ENCODE measurements at regions of chr14 and their contacts with region 1.

Region 1: DNA sequence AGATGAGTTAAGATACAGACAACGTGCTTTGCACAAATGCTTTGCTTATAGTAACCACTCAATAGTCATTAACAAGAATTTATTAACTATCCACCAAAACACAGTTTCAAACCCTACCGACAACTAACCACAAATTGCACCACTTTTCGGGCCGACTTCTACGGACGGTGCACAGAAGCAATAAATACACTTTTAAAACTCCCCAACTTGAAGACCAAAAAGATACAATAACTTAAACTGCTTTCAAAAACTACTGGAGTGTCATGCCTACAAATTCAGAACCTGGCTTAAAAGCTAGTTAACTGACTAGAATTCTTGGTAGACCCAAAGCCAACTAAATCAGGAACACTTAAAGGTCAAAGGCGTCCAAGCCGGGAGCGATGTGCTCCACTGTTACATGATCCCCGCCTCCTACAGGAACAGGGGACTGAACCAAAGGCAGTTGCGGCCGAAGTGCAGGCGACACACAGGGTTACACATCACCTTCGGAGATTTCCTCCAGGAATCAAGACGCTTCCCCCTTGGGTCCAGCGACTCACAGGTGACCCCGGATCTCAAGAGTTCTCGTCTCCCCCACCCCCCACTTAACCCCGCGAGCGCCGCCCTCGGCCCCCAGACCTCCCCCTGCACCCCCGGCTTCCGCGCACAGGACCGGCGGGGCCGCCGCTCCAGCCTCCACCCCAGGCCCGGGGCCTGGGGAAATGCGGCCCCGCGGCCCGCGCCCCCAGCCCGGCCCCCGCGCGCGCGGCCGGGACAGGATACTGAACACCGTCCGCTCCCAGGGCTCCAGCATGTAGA is 507 bp downstream of the SPTSSA start:
- DNase-seq: peak in 4 of 5 donors; percentile 37 to 69 (median 56)
- ATAC-seq: peak; percentile 25 to 62 (median 47)
- H3K4me3 ChIP-seq: peak overlapping the region; percentile 65 to 96 (median 76)
- H3K27ac ChIP-seq: peak overlapping the region; percentile 78 to 96 (median 90)
- H3K4me1 ChIP-seq: peaks cover 0 to 33% (median 17%) of the 10 kb centered on the region in 12 donors
- H3K27me3 ChIP-seq: no peaks in the 10 kb centered on the region
- CTCF ChIP-seq: no peak
- POLR2A ChIP-seq: no peak

Region 2: GRCh38 chr14:34539407-34540180 is 78.1 kb after region 1 on chr14 and contains the start of gene EAPP:
- intact Hi-C with region 1: loop called in 4 of 10 experiments (anchors 5 to 10 kb)
- DNase-seq: peak; percentile 97 to 99 (median 98)
- ATAC-seq: peak; percentile 99
- H3K4me3 ChIP-seq: peak within 1 kb of the TSS; percentile 63 to 99 (median 82)
- H3K27ac ChIP-seq: peak within 1 kb of the TSS; percentile 73 to 96 (median 88)
- H3K4me1 ChIP-seq: peaks cover 0 to 26% (median 19%) of the 10 kb centered on the region in 12 donors
- H3K27me3 ChIP-seq: no peaks in the 10 kb centered on the region
- CTCF ChIP-seq: peak in 2 of 12 donors; percentile 17 to 20
- POLR2A ChIP-seq: peak; percentile 44 to 93
- total RNA-seq, gene EAPP: 11.4 to 28.5 (median 19.4) TPM

Region 3: DNA sequence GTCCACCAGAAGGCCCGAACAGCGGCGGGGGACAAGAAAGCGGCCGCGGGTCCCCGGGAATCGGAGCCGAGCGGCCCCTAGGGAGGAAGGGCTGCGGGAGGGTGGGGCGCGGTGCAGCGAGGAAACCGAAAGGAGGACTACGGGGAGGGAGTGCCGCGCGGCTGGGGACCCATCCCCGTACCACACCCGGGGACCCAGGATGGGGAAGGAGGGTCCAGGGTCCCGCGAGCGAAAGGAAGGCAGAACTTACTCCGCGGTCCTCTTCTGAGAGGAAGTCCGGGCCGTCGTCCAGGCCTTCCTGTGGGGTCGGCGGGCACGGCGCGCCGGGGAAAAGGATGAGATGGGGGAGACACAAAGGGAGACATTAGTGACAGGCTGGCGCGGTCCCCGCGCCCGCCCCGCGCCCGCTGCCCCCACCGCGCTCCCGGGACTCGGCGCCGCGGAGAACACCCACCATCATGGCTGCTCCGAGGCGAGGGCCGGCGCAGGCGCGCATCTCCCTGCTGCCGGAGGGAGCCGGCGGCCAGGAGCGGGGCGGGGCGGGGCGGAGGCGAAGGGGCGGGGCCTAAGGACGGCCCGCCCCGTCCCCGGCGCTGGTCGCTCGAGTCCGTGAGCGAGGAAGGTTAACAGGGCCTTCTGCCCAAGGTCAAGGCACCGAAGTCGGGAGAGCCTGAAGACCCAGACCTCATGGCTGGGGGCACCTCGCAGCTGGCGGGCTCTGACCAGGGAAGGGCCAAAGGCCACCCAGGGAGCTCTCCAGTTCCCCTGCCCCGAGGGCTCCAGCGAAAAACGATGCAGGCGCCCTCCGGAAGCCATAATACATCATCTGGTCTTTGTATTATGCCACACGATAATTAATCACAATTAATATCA is 168.4 kb after region 1 on chr14 and contains the start of gene SNX6:
- intact Hi-C with region 1: loop called in 1 of 10 experiments (anchors 10 kb)
- DNase-seq: peak; percentile 85 to 92 (median 88)
- ATAC-seq: peak; percentile 88 to 99 (median 98)
- H3K4me3 ChIP-seq: peak within 1 kb of the TSS; percentile 75 to 99 (median 88)
- H3K27ac ChIP-seq: peak within 1 kb of the TSS; percentile 92 to 99 (median 96)
- H3K4me1 ChIP-seq: peaks cover 0 to 49% (median 10%) of the 10 kb centered on the region in 12 donors
- H3K27me3 ChIP-seq: no peaks in the 10 kb centered on the region
- CTCF ChIP-seq: no peak
- POLR2A ChIP-seq: peak in 1 of 2 donors; percentile 73
- total RNA-seq, gene SNX6: 52.4 to 103 (median 64.3) TPM

Measured in heart left ventricle (tissue), 16 donors.